ENCODE measurements at regions of chr5 and their contacts with region 1.

Region 1: DNA sequence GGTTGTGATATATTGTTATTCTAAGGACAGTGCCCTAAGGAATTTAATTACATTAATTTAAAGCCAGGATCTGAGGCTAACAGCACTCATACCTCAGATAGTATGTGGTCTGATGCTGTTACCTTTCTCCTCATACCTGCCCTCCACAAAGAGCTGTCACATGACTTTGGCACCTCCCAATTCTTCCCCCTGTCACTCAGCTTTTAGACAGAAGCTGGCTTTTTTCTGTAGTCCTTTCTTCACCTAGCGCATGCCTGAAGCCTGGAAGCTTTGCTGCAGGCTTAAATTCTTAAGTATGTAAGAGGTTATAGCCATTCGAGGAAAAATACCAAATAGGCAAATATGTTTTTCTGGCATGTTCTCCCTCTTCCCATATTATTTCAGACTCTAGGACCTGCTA is 61.0 kb upstream of the ADAMTS19 start:
- DNase-seq: no peak
- H3K4me3 ChIP-seq: no peak overlapping the region
- H3K27ac ChIP-seq: no peak overlapping the region
- H3K4me1 ChIP-seq: no peaks in the 10 kb centered on the region
- H3K27me3 ChIP-seq: peaks cover 2% of the 10 kb centered on the region
- CTCF ChIP-seq: no peak
- EP300 ChIP-seq: no peak
- POLR2A ChIP-seq: no peak

Region 2: GRCh38 chr5:128913551-128913950 is 485.5 kb before region 1 on chr5:
- intact Hi-C with region 1: loop called in 1 of 4 experiments (anchors 5 kb)
- DNase-seq: no peak
- H3K4me3 ChIP-seq: no peak overlapping the region
- H3K27ac ChIP-seq: no peak overlapping the region
- H3K4me1 ChIP-seq: no peaks in the 10 kb centered on the region
- H3K27me3 ChIP-seq: no peaks in the 10 kb centered on the region
- CTCF ChIP-seq: no peak
- EP300 ChIP-seq: no peak
- POLR2A ChIP-seq: no peak

Measured in ovary (tissue), 10 donors.